HCT116 (cell line): ENCODE measurements at regions of chr2 and their contacts with region 1.

Region 1: DNA sequence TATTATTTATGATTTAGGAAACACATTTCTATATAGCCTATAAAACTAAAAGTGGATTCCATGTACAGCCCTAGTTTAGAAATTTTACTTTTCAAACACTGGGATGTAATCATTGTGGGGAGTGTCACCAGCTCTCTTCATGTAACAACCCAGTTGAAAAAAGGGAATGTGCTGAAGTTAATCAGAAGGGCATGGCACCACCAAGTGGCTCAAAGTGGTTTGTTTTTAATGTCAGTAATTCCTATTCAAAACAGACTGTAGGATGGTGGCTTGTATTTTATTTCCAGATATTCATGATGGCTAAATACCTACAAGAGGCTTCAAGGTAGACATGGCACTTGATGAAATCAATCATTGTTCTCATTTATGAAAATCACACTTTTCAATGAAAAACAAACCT is 58.1 kb upstream of the TMEM182 start:
- DNase-seq: peak; percentile 23
- ATAC-seq: peak; percentile 89
- H3K4me3 ChIP-seq: no peak overlapping the region
- H3K27ac ChIP-seq: no peak overlapping the region
- H3K4me1 ChIP-seq: peaks cover 5 to 7% of the 10 kb centered on the region in 2 experiments
- H3K27me3 ChIP-seq: no peaks in the 10 kb centered on the region
- CTCF ChIP-seq: peak; percentile 31 to 57 (median 49); a peak in 4 of 6 replicates
- POLR2A ChIP-seq: no peak
- RAD21 ChIP-seq: peak; percentile 76

Region 2: GRCh38 chr2:102615622-102616436 is 87.9 kb before region 1 on chr2:
- CTCF ChIA-PET with region 1: interaction called, 20 read pairs
- POLR2A ChIA-PET with region 1: no interaction called
- RAD21 ChIA-PET with region 1: no interaction called
- intact Hi-C with region 1: loop called (anchors 1 kb)
- DNase-seq: peak; percentile 35
- ATAC-seq: peak; percentile 78
- H3K4me3 ChIP-seq: no peak overlapping the region
- H3K27ac ChIP-seq: no peak overlapping the region
- H3K4me1 ChIP-seq: peaks cover 8 to 15% of the 10 kb centered on the region in 2 experiments; a peak in 2 of 4 replicates
- H3K27me3 ChIP-seq: no peaks in the 10 kb centered on the region
- CTCF ChIP-seq: peak; percentile 81 to 97 (median 92)
- POLR2A ChIP-seq: no peak
- RAD21 ChIP-seq: peak; percentile 75